Dorsolateral prefrontal cortex (tissue), 120 donors: ENCODE measurements at regions of chr2 and their contacts with region 1.

Region 1: DNA sequence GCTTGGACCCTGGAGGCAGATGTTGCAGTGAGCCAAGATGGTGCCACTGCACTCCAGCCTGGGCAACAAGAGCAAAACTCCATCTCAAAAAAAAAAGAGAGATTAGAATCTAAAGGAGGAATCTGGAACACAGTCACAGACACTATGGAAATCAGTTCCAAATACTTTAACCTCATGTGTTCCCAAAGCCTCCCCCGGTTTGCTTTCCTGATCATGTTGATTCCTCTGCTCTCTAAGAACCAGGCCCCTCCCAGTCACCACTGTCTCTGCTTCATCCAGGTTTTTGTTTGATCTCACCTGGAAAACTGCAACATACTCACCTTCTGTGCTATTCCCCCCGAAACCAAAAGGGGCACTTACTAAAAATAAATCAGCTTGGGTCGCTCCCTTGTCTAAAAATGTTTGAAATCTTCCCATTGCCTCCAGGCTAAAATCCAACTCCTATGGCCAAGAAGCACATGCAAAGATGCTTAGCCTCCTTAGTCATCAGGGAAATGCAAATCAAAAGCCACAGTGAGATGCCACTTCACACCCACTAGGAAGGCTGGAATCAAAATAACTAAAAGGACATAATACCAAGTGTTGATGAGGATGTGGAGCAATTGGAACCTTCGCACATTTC is 6.2 kb upstream of the NEU2 start:
- DNase-seq: no peak
- H3K4me3 ChIP-seq: no peak overlapping the region
- H3K27ac ChIP-seq: peak overlapping the region in 6 of 59 donors; percentile 6 to 64 (median 18)
- H3K27me3 ChIP-seq: no peaks in the 10 kb centered on the region
- CTCF ChIP-seq: no peak

Region 2: DNA sequence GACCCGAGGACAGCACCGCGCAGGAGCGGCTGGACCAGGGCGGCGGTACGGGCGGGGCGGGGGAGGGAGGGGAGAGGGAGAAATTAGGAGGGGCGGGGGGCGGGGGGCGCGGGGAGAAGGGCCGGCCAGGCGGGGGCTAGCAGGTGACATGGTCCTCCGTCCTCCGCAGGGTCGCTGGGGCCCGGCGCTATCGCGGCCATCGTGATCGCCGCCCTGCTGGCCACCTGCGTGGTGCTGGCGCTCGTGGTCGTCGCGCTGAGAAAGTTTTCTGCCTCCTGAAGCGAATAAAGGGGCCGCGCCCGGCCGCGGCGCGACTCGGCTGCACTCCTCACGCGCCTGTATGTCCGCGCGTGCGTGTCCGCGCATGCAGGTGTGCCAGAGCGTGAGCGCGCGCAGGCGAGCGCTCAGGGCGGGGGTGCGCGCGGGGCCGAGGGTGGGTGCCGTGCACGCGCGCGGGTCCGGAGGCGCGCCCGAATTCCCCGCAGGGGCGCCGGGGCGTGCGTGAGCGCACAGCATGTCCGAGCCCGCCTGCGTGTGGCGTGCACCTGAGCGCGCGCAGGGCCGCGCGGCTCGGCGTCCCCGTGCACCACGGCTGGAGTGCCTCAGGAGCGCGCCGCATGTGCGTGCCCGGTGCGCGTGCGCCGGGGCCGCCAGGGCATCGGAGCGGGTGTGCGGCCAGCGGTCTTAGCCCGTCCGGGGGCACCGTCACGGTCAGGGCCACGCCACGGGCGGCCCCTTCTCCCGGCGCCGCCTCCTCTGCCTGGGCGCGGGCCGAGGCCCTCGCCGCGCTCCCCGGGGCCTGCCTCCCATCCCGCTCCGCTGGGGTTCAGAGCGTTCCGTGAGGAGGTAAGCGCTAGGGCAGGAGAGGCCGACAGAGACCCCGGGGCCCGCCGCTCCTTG is 150.0 kb before region 1 on chr2:
- intact Hi-C with region 1: loop called in 1 of 2 experiments (anchors 5 kb)
- DNase-seq: peak in 6 of 10 donors; percentile 29 to 81 (median 68)
- H3K4me3 ChIP-seq: peak overlapping the region; percentile 39 to 80 (median 62)
- H3K27ac ChIP-seq: peak overlapping the region; percentile 37 to 99 (median 95)
- H3K27me3 ChIP-seq: peaks cover 0 to 4% (median 0%) of the 10 kb centered on the region in 45 donors
- CTCF ChIP-seq: peak in 4 of 56 donors; percentile 8 to 23 (median 10)

Region 3: GRCh38 chr2:232929303-232930058 is 96.8 kb before region 1 on chr2:
- intact Hi-C with region 1: loop called in 1 of 2 experiments (anchors 5 kb)
- DNase-seq: no peak
- H3K4me3 ChIP-seq: no peak overlapping the region
- H3K27ac ChIP-seq: peak overlapping the region in 1 of 59 donors; percentile 43
- H3K27me3 ChIP-seq: peaks cover 0 to 20% (median 0%) of the 10 kb centered on the region in 45 donors
- CTCF ChIP-seq: no peak

Region 4: DNA sequence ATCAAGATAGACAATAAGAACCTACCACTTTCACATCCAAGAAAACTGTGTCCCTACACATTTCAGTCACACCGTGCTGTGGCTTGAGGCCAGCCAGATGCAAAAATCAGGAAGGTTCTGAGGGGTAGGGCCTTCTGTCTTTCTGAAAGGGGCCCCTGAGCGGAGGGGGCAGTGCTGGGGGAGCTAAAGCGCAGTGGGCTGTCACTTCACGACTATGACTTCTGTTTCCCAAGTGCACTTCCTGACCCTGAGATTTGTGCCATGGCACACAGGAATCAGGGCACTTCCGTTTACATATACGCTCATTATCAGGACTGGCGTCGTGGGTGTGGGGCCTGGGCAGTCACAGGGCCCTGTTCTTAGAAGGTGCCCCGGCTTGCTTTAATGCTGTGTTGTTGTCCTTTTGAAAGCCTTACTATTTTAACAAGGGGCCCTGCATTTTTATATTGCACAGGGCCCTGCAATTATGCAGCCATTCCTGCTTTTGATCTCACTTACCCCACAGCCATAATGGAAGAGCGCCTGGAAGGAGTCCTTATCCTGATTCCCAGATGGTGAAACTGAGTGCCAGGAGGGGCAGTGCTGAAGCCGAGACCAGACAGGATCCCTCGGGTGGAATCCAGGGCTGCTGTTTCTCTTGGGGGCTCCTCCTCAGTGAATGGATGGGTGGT is 13.9 kb before region 1 on chr2:
- intact Hi-C with region 1: loop called in 1 of 2 experiments (anchors 1 kb)
- DNase-seq: peak in 1 of 10 donors; percentile 26
- H3K4me3 ChIP-seq: no peak overlapping the region
- H3K27ac ChIP-seq: no peak overlapping the region
- H3K27me3 ChIP-seq: no peaks in the 10 kb centered on the region
- CTCF ChIP-seq: no peak